Posterior vena cava (tissue), 2 donors: ENCODE measurements at regions of chr1 and their contacts with region 1.

Region 1: DNA sequence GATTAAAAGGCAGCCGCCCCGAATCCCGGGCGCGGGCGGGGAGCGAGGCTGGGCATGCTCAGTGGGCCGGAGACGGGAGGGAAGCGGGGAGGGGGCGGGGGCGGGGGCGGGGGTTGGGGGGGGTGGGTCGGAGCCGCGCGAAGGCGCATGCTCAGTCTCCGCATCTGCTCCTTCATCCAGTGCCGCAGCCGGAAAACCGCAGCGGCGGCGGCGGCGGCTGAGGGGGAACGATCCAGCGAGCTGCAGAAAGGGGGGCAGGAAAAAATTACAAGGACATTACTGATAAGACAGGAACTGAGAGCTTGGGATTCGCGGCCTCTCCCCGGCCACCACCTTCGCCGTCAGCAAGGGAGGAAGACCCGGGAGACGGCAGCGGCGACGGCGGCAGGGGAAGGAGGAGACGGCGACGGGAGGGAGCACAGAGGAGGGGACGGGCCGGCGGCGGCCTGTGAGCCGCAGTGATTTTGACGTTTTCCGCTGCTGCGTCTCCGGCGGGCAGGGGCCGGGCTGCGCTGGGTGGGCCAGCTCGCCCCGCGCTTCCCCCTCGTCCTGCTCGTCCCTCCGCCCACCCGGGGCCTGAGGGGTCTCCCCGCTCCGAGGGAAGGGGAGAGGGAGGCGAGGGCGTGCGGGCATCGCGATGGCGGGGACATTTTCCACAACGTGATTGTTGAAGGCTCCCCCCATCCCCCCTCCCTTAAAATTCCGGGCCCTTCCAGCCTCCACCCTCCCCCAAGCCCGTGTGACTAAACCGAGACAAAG is at the start of gene CAMSAP2:
- DNase-seq: peak; percentile 96
- total RNA-seq, gene CAMSAP2: 31.9 to 48.6 TPM

Region 2: GRCh38 chr1:200669314-200670241 is 69.3 kb before region 1 on chr1 and contains the start of gene DDX59:
- intact Hi-C with region 1: loop called in 1 of 2 experiments (anchors 10 kb)
- DNase-seq: peak; percentile 99
- total RNA-seq, gene DDX59: 27.1 to 27.6 TPM

Region 3: DNA sequence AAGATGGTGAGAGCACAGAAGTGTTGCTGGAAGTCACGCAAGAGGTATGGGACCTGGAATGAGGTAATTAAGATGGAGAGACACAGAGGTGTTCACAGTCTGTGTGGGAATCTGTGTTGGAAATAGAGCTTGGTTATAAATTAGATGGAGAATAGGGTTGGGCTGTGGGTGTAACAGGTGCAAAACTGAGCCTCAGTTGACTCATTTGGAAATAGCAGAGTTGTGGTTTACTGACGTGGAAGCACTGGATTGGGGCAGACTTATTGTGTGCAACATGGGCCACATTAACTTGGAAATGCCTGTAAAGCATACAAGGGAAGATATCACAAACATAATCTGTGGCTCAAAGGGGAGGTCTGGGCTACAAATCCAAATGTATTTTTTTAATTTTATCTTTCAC is 12.8 kb after region 1 on chr1:
- intact Hi-C with region 1: no loop called
- DNase-seq: no peak